ENCODE measurements at regions of chr7 and their contacts with region 1.

Region 1: DNA sequence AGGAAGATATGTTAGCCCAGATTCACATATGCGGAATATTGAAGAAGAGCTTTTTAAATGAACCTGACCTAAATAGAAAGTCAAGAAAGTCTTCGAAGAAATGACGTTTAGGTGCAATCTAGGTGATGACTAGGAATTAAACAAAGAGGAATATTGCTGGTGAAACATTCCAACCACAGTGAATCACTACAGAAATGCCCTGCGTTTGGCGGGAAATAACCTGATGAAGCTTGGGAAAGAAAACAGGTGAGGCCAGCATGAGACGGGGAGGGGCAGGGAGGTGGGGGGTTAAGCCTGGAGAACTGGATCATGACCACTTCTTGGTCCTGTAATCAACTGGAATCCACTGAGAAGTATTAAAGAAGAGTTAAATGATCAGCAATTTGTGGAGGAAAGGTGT is 299.4 kb upstream of the VSTM2A start:
- DNase-seq: no peak
- H3K4me3 ChIP-seq: no peak overlapping the region
- H3K27ac ChIP-seq: no peak overlapping the region
- H3K4me1 ChIP-seq: no peaks in the 10 kb centered on the region
- H3K27me3 ChIP-seq: no peaks in the 10 kb centered on the region
- CTCF ChIP-seq: no peak

Region 2: DNA sequence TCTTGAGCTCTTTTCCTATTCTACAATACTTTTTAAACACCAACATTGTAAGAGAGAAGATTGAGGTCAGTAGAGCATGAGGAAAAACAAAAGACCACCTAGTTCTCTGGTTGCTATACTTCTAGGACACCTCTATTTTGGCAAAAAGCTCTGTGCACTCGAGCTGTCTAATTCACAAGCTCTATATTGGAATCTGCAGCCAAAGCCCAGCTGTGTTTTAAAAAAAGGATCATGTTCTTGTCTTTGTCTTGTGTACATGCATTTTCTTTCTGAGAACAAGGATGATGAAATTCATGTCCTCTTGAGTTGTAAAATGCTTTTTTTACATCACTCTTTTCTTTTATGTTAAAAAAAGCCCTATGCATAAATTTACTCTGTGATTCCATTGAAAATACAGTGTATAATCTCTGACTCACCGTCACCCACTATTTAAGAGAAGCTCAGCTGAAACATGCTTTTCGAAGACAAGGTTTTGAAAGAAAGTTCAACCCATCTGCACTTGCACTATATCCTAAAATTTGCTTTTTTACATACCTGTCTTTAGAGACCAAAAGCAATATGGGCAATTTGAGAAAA is 83.9 kb after region 1 on chr7:
- CTCF ChIA-PET with region 1: no interaction called
- POLR2A ChIA-PET with region 1: no interaction called
- intact Hi-C with region 1: loop called (anchors 10 kb)
- DNase-seq: no peak
- H3K4me3 ChIP-seq: no peak overlapping the region
- H3K27ac ChIP-seq: no peak overlapping the region
- H3K4me1 ChIP-seq: no peaks in the 10 kb centered on the region
- H3K27me3 ChIP-seq: no peaks in the 10 kb centered on the region
- CTCF ChIP-seq: no peak

Measured in A673 (cell line).